A673 (cell line): ENCODE measurements at regions of chr3 and their contacts with region 1.

Region 1: GRCh38 chr3:192444096-192444790 is 283.1 kb downstream of the FGF12 start:
- DNase-seq: peak; percentile 76
- H3K4me3 ChIP-seq: no peak overlapping the region
- H3K27ac ChIP-seq: no peak overlapping the region
- H3K4me1 ChIP-seq: peaks cover 18% of the 10 kb centered on the region
- H3K27me3 ChIP-seq: no peaks in the 10 kb centered on the region
- CTCF ChIP-seq: peak; percentile 99

Region 2: DNA sequence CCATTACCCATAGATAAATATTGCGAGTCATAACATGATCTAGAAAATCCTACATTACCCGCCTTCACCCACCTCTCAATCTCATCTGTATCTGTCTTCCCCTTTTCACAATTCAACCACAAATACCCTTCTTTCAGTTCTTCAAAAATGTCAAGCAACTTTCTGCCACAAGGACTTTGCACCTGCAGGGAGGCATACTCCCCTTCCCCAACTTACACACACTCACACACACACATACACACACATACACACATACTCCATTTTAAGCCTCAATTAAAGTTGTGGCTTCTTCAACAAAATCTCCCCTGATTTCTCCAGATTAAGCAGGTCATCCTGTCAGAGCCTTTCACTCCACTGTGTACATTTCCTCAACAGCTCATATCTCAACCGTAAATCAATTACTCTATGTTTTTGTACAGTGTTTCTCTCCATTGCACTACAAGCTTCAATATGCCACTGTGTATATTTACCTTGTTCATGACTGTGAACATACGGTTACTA is 1148.2 kb before region 1 on chr3:
- CTCF ChIA-PET with region 1: no interaction called
- POLR2A ChIA-PET with region 1: no interaction called
- intact Hi-C with region 1: no loop called
- DNase-seq: no peak
- H3K4me3 ChIP-seq: no peak overlapping the region
- H3K27ac ChIP-seq: no peak overlapping the region
- H3K4me1 ChIP-seq: no peaks in the 10 kb centered on the region
- H3K27me3 ChIP-seq: no peaks in the 10 kb centered on the region
- CTCF ChIP-seq: no peak

Region 3: DNA sequence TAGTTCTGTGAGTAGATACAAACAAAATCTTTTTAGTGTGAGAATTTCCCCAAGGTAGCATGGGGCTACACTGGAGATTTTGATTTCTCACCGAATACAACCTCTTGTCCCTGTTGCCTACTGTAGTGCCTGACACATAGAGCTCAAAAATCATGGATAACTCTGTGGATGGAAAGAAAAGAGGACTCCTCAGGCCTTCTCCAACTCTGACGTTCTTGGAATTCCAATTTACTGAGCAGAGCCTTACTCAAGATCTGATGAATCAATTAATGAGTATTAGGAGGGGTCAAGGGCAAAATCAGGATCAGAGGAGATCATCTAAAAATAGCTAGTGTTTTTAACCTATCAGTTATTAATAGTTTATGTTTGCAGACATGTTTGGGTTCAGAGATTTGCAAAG is 1030.0 kb before region 1 on chr3:
- CTCF ChIA-PET with region 1: no interaction called
- POLR2A ChIA-PET with region 1: no interaction called
- intact Hi-C with region 1: loop called (anchors 2 kb)
- DNase-seq: no peak
- H3K4me3 ChIP-seq: no peak overlapping the region
- H3K27ac ChIP-seq: no peak overlapping the region
- H3K4me1 ChIP-seq: no peaks in the 10 kb centered on the region
- H3K27me3 ChIP-seq: no peaks in the 10 kb centered on the region
- CTCF ChIP-seq: no peak

Region 4: GRCh38 chr3:192090586-192090985 is 353.7 kb before region 1 on chr3:
- CTCF ChIA-PET with region 1: no interaction called
- POLR2A ChIA-PET with region 1: no interaction called
- intact Hi-C with region 1: no loop called
- DNase-seq: no peak
- H3K4me3 ChIP-seq: no peak overlapping the region
- H3K27ac ChIP-seq: no peak overlapping the region
- H3K4me1 ChIP-seq: no peaks in the 10 kb centered on the region
- H3K27me3 ChIP-seq: no peaks in the 10 kb centered on the region
- CTCF ChIP-seq: no peak

Region 5: DNA sequence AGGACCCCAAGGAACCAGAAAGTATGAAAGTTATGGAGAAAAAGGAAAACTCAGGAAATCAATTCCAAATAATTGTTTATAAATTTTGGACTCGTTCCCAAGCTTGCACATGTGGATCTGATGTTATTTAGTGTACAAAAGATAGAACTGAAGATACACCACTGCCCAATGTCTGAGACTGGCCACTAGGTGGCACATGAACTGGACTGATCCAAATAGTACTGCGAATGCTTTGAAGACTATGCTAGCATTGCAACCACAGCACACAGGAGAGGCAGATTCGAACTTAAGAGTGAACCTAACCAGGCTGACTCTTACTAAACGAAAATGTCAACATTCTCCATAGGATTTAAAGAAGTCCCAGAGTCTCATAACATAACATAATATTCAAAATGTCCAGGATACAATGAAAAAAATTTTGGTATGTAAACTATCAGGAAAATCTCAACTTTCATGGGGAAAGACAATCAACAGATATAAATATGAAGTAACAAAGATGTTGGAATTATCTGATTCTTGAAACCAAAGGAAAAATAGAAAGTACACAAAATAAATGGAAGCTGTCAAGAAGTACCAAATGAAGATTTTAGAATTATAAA is 313.6 kb before region 1 on chr3:
- CTCF ChIA-PET with region 1: interaction called, 3 read pairs
- POLR2A ChIA-PET with region 1: no interaction called
- intact Hi-C with region 1: loop called (anchors 2 kb)
- DNase-seq: peak; percentile 73
- H3K4me3 ChIP-seq: no peak overlapping the region
- H3K27ac ChIP-seq: no peak overlapping the region
- H3K4me1 ChIP-seq: no peaks in the 10 kb centered on the region
- H3K27me3 ChIP-seq: no peaks in the 10 kb centered on the region
- CTCF ChIP-seq: peak; percentile 90

Region 6: DNA sequence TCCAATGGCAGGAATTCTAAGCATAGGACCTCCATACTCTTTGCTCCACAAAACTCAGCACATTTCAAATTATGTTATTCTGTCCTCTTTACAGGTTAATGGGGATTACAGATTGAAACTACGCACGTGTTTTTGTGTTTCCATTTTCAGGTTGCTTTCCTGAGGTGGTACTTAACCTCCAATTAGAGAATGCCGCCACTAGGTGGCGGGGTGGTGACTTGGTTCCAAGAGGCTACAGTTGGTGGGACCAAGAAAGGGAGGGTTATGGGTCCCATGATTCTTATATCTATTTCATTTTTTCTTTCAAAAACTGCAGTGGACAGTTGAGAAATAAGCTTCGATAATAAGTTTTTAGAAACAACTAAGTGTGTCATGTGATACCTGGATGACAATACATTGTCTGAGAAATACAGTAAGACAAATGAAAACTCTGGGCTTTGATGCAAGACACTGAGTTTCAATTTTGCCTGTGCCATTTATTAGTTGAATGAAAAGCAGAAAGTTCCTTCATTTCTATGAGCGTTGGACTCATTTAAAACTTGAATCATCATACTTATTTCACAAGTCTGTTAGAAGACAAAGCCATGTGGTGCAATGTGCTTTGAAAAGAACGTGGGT is 255.9 kb before region 1 on chr3:
- CTCF ChIA-PET with region 1: interaction called, 10 read pairs
- POLR2A ChIA-PET with region 1: no interaction called
- intact Hi-C with region 1: loop called (anchors 1 kb)
- DNase-seq: peak; percentile 71
- H3K4me3 ChIP-seq: no peak overlapping the region
- H3K27ac ChIP-seq: no peak overlapping the region
- H3K4me1 ChIP-seq: peaks cover 16% of the 10 kb centered on the region
- H3K27me3 ChIP-seq: no peaks in the 10 kb centered on the region
- CTCF ChIP-seq: peak; percentile 83

Region 7: GRCh38 chr3:192642651-192643050 is 198.4 kb after region 1 on chr3:
- CTCF ChIA-PET with region 1: no interaction called
- POLR2A ChIA-PET with region 1: no interaction called
- intact Hi-C with region 1: no loop called
- DNase-seq: no peak
- H3K4me3 ChIP-seq: no peak overlapping the region
- H3K27ac ChIP-seq: no peak overlapping the region
- H3K4me1 ChIP-seq: no peaks in the 10 kb centered on the region
- H3K27me3 ChIP-seq: no peaks in the 10 kb centered on the region
- CTCF ChIP-seq: no peak

Region 8: GRCh38 chr3:193052354-193053045 is 608.3 kb after region 1 on chr3:
- CTCF ChIA-PET with region 1: no interaction called
- POLR2A ChIA-PET with region 1: no interaction called
- intact Hi-C with region 1: no loop called
- DNase-seq: peak; percentile 18
- H3K4me3 ChIP-seq: no peak overlapping the region
- H3K27ac ChIP-seq: no peak overlapping the region
- H3K4me1 ChIP-seq: peaks cover 3% of the 10 kb centered on the region
- H3K27me3 ChIP-seq: no peaks in the 10 kb centered on the region
- CTCF ChIP-seq: no peak